CD14-positive monocyte (primary cell): ENCODE measurements at regions of chr5 and their contacts with region 1.

Region 1: DNA sequence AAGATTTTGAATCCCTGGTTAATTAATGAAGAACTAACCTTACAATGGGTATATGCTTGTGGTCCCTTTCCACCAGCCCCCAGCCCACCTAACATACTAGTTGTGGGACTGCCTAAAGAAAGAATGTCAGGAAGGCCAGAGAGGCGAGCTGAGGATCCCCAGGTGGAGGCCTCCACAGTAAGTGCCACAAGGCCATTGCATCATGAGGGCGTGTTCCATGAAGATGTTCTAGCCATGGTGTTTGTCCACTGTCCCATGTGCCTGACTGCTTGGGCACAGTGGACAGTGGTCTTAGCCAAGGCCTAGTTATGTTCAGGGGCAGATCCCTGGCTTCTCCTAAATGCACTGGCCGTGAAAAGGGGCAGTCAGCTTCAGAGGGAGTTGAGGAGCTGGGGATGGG is 21.2 kb downstream of the ZFP62 start:
- DNase-seq: no peak
- H3K4me3 ChIP-seq: no peak overlapping the region
- H3K4me3 Mint-ChIP-seq: no peak overlapping the region
- H3K27ac ChIP-seq: no peak overlapping the region
- H3K27ac Mint-ChIP-seq: peak overlapping the region in 1 of 7 donors; percentile 68
- H3K4me1 ChIP-seq: no peaks in the 10 kb centered on the region
- H3K4me1 Mint-ChIP-seq: peaks cover 2% of the 10 kb centered on the region
- H3K27me3 ChIP-seq: no peaks in the 10 kb centered on the region
- H3K27me3 Mint-ChIP-seq: peaks cover 0 to 3% (median 0%) of the 10 kb centered on the region in 3 donors
- CTCF ChIP-seq: no peak

Region 2: GRCh38 chr5:180802325-180803180 is 37.4 kb before region 1 on chr5 and contains the start of gene MGAT1:
- intact Hi-C with region 1: loop called in 1 of 2 experiments (anchors 5 kb)
- DNase-seq: peak; percentile 82 to 87 (median 82)
- H3K4me3 ChIP-seq: peak within 1 kb of the TSS; percentile 97 to 98 (median 98)
- H3K4me3 Mint-ChIP-seq: peak within 1 kb of the TSS; percentile 95 to 97
- H3K27ac ChIP-seq: peak within 1 kb of the TSS; percentile 97 to 98
- H3K27ac Mint-ChIP-seq: peak within 1 kb of the TSS; percentile 94 to 98 (median 97)
- H3K4me1 ChIP-seq: peaks cover 82 to 88% of the 10 kb centered on the region in 2 donors
- H3K4me1 Mint-ChIP-seq: peaks cover 82% of the 10 kb centered on the region
- H3K27me3 ChIP-seq: no peaks in the 10 kb centered on the region
- H3K27me3 Mint-ChIP-seq: no peaks in the 10 kb centered on the region
- CTCF ChIP-seq: no peak
- polyA plus RNA-seq, gene MGAT1: 231 to 523 (median 385) TPM